ENCODE measurements at regions of chr7 and their contacts with region 1.

Region 1: GRCh38 chr7:111343017-111343416 is 219.3 kb downstream of the IMMP2L start:
- DNase-seq: no peak
- H3K4me3 ChIP-seq: no peak overlapping the region
- H3K27ac ChIP-seq: no peak overlapping the region
- H3K4me1 ChIP-seq: no peaks in the 10 kb centered on the region
- H3K27me3 ChIP-seq: no peaks in the 10 kb centered on the region
- CTCF ChIP-seq: no peak
- POLR2A ChIP-seq: no peak

Region 2: DNA sequence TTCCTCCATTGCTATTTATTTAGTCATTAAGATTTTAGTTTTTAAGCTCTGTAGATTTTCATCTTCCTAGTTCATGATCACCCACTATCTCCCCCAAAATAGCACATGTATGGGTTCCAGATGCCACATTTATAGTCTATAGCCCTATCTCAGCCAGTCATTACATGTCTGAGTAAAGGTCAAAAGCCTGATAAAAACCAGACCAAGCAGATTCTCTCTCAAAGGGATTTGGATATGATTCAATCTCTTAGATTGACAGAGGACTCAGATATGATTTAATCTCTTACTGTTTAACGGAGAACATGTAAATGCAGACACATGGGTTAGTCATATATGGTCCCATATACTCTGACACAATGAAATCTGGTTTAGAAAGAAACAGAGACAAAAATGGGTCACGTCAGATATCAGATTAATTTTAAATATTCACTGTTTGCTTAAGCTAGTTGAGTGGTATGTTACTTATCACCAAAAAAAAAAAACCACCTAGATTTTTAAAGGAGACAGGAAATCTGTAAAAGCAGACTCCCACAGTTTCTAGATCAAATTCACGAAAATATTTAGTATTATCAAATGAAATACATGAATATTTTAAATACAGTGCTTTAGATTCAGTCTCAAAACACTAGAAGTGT is 359.1 kb before region 1 on chr7:
- intact Hi-C with region 1: loop called (anchors 5 kb)
- DNase-seq: no peak
- H3K4me3 ChIP-seq: no peak overlapping the region
- H3K27ac ChIP-seq: no peak overlapping the region
- H3K4me1 ChIP-seq: no peaks in the 10 kb centered on the region
- H3K27me3 ChIP-seq: no peaks in the 10 kb centered on the region
- CTCF ChIP-seq: no peak
- POLR2A ChIP-seq: no peak

Measured in breast epithelium (tissue), 4 donors.